Calu3 (cell line): ENCODE measurements at regions of chr18 and their contacts with region 1.

Region 1: DNA sequence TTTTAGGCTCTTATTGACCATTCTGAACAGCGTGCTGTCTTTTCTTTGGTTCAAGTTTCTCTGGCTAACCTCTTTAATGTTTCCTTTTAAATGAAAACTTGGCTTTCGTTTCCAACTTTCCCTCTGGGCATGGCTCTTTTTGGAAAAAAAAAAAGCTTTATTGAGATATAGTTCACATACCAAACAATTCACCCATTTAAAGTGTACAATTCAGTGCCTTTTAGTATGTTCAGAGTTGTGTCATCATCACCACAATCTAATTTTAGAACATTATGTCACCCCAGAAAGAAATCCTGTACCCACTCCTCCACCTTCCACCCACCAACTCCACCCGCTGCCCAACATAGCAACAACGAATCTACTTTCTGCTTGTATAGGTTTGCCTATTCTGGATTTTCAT is 322.4 kb downstream of the ADCYAP1 start:
- DNase-seq: no peak
- H3K4me3 Mint-ChIP-seq: no peak overlapping the region
- H3K27ac Mint-ChIP-seq: no peak overlapping the region
- H3K4me1 Mint-ChIP-seq: no peaks in the 10 kb centered on the region
- H3K27me3 Mint-ChIP-seq: no peaks in the 10 kb centered on the region
- CTCF ChIP-seq: no peak

Region 2: DNA sequence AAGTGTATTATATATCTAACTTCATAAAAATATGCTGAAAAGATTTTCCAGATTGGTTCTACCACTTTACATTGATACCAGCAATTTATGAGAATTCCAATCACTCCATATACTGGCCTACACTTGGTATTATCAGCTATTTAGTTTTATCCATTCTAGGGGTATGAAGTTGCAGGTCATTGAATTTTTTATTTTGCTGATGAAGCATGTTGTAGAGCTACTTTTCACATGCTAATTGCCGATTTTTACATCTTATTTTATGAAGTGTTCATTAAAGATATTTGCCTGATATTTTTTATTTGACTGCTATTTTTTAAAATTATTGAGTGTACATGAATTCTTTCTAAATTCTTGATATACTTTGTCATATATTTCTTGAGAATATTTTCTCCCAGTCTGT is 219.7 kb after region 1 on chr18:
- CTCF ChIA-PET with region 1: no interaction called
- intact Hi-C with region 1: loop called (anchors 10 kb)
- DNase-seq: no peak
- H3K4me3 Mint-ChIP-seq: no peak overlapping the region
- H3K27ac Mint-ChIP-seq: no peak overlapping the region
- H3K4me1 Mint-ChIP-seq: no peaks in the 10 kb centered on the region
- H3K27me3 Mint-ChIP-seq: no peaks in the 10 kb centered on the region
- CTCF ChIP-seq: no peak